ENCODE measurements at regions of chr17 and their contacts with region 1.

Region 1: GRCh38 chr17:59004338-59005111 is 102.2 kb downstream of the TRIM37 start:
- DNase-seq: peak; percentile 90
- H3K4me3 Mint-ChIP-seq: peak overlapping the region; percentile 4
- H3K27ac Mint-ChIP-seq: peak overlapping the region; percentile 30
- H3K4me1 Mint-ChIP-seq: peaks cover 15% of the 10 kb centered on the region
- H3K27me3 Mint-ChIP-seq: no peaks in the 10 kb centered on the region

Region 2: DNA sequence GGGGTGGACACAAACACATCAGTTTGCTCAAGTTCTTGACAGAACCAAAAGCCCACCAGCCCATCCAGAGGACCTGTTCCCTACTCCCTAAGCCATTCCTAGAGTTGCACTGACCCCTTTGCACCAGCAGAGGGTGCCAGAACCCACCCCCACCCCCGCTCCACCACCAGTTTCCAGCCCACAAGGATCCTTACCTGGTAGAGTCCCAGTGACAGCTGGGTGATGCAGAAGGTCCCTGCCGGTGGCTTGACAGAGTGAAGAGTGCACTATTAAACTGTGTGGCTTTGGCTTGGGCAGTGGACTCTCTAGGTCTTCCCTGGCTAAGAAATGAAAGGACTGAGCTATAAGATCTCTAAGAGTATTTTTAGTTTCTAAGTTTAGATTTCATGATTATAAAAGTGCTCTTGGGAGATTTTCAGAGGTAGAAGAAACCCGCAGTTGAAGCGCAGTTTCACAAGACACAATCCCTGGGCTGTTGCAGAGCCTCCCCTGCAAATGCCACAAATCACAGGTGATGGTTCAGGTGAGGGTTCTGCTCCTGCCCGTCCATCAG is 416.7 kb before region 1 on chr17:
- intact Hi-C with region 1: loop called (anchors 1 kb)
- DNase-seq: peak; percentile 82
- H3K4me3 Mint-ChIP-seq: no peak overlapping the region
- H3K27ac Mint-ChIP-seq: no peak overlapping the region
- H3K4me1 Mint-ChIP-seq: peaks cover 1% of the 10 kb centered on the region
- H3K27me3 Mint-ChIP-seq: peaks cover 6% of the 10 kb centered on the region

Region 3: DNA sequence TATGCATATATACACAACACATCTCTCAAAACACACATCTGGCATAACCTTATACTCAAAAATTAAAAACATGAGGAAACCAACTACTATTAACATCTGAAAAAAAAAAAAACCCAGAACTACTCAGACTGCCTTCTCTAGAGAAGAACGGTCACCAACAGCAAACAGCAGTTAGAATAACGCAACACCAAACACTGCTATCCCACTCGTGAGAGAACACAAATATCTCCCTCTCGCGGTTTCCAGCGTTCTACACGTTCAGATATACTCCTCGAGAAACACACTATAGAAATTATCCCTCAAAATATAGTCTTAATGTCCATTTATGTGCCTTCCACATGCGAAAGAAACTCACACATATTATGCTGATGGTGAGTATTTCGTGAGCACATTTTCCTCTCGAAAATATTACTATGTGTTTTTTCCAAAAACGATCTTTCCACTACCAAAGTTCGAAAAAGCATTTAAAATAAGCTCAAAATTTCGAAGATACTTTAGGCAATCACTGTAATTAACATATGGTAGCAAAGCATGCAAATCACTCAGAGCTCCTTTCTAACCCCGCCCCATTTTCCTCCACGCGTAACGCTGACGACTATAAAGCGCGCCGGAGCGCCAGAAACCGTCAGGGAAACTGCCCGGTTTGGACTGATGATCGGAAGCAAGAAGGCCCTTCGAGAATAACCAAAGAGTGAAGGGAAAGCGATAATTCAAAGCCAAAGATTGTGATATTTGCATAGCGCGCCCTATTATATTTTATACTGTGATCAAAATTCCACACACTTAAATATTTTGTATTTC is 372.8 kb before region 1 on chr17:
- intact Hi-C with region 1: loop called (anchors 1 kb)
- DNase-seq: peak; percentile 99
- H3K4me3 Mint-ChIP-seq: no peak overlapping the region
- H3K27ac Mint-ChIP-seq: no peak overlapping the region
- H3K4me1 Mint-ChIP-seq: peaks cover 2% of the 10 kb centered on the region
- H3K27me3 Mint-ChIP-seq: peaks cover 4% of the 10 kb centered on the region

Region 4: DNA sequence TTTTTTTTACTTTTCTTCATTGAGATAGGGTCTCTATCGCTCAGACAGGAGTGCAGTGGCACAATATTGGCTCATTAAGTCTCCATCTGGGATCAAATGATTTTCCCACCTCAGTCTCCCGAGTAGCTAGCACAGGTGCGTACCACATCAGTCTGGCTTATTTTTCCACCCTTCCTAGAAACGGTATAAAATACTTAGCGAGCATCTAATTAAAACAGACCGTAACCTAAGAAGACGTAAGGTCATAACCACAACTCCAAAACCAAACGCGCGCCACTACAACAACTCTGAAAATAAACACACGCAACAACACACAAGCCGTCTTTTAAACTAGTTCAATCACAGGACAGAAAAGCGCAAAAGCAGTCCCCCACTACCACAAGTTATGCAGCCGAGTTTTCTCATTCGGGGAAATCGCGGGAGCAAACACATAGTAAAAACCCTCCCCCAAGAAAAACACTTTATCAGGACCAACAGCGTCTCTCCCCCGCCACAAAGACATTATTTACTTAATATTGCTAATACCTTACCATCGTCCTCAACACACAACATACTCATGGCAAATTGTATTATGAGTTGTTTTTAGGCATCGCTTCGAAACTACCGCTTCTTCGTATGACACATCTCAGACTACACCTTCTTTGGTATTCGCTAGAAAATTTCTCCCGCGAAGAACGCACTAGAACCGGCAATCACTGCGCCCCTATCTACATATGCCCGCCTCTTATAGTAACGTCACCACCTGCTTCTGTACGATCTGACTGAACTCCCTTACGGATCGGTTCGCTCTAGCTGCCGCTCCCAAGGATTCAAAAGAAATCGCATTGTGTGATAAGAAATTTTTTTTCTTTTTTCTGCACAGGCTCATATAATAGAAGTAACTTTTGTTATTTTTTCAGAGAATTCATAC is 345.5 kb before region 1 on chr17:
- intact Hi-C with region 1: loop called (anchors 1 kb)
- DNase-seq: peak; percentile 94
- H3K4me3 Mint-ChIP-seq: peak overlapping the region; percentile 78
- H3K27ac Mint-ChIP-seq: peak overlapping the region; percentile 99
- H3K4me1 Mint-ChIP-seq: peaks cover 20% of the 10 kb centered on the region
- H3K27me3 Mint-ChIP-seq: peaks cover 13% of the 10 kb centered on the region

Region 5: GRCh38 chr17:58710936-58711775 is 293.4 kb before region 1 on chr17:
- intact Hi-C with region 1: loop called (anchors 1 kb)
- DNase-seq: peak; percentile 80
- H3K4me3 Mint-ChIP-seq: no peak overlapping the region
- H3K27ac Mint-ChIP-seq: no peak overlapping the region
- H3K4me1 Mint-ChIP-seq: peaks cover 11% of the 10 kb centered on the region
- H3K27me3 Mint-ChIP-seq: no peaks in the 10 kb centered on the region

Region 6: GRCh38 chr17:58755577-58756245 is 248.8 kb before region 1 on chr17 and contains the start of gene PPM1E:
- intact Hi-C with region 1: loop called (anchors 5 kb)
- DNase-seq: peak; percentile 86
- H3K4me3 Mint-ChIP-seq: peak within 1 kb of the TSS; percentile 85
- H3K27ac Mint-ChIP-seq: no peak within 1 kb of the TSS
- H3K4me1 Mint-ChIP-seq: peaks cover 9% of the 10 kb centered on the region
- H3K27me3 Mint-ChIP-seq: peaks cover 75% of the 10 kb centered on the region
- total RNA-seq, gene PPM1E: 0.05 TPM in 1 of 2 replicates, not detected in the other

Region 7: GRCh38 chr17:58870753-58871152 is 133.8 kb before region 1 on chr17:
- intact Hi-C with region 1: loop called (anchors 10 kb)
- DNase-seq: no peak
- H3K4me3 Mint-ChIP-seq: no peak overlapping the region
- H3K27ac Mint-ChIP-seq: no peak overlapping the region
- H3K4me1 Mint-ChIP-seq: no peaks in the 10 kb centered on the region
- H3K27me3 Mint-ChIP-seq: peaks cover 9% of the 10 kb centered on the region